ENCODE measurements at regions of chr7 and their contacts with region 1.

Region 1: DNA sequence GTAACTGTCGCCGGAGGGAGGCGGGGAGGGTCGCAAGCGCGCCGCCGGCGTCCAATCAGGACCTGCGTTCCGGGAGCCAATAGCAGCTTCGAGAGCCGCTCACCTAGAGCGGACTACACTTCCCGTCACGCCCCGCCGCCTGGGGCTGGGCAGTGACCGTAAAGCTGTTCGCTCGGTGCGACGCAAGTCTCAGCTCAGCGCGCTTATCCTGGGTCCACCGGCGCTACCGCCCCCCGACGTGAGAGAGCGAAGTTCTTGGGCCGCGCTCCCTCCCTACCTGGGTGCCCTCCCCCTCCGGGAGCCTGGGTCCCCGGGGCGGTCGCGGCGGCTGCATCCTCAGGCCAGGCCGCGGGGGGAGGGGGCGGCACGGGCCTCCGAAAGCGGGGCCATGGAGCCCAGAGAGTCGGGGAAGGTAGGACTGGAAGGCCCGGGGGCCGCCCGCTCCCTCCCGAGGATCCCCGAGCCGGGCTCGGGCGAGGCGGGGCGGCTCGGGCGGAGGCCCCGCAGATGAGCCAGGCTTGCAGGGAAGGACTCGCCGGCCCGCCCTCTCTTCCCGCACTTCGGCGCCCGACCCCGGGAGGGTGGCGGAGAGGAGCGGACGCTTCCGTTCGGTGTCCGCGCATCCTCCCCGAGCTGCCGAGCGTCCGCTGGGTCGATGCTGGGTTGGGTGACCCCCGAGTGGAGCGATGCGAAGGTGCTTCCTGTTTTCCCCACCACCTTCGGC is at the start of gene ZNF862:
- DNase-seq: peak; percentile 99
- H3K4me3 ChIP-seq: peak within 1 kb of the TSS; percentile 86 to 99 (median 98)
- H3K27ac ChIP-seq: peak within 1 kb of the TSS; percentile 94 to 98 (median 96)
- H3K4me1 ChIP-seq: peaks cover 10 to 21% (median 17%) of the 10 kb centered on the region in 4 donors
- H3K27me3 ChIP-seq: peaks cover 0 to 9% (median 0%) of the 10 kb centered on the region in 4 donors
- CTCF ChIP-seq: no peak
- EP300 ChIP-seq: no peak
- POLR2A ChIP-seq: peak; percentile 17
- total RNA-seq, gene ZNF862: 9.1 to 17.1 (median 13.3) TPM

Region 2: GRCh38 chr7:149714050-149714909 is 124.1 kb before region 1 on chr7:
- intact Hi-C with region 1: loop called (anchors 5 kb)
- DNase-seq: no peak
- H3K4me3 ChIP-seq: peak overlapping the region; percentile 72 to 85 (median 77)
- H3K27ac ChIP-seq: peak overlapping the region; percentile 81 to 87 (median 82)
- H3K4me1 ChIP-seq: peaks cover 22 to 48% (median 35%) of the 10 kb centered on the region in 4 donors
- H3K27me3 ChIP-seq: no peaks in the 10 kb centered on the region
- CTCF ChIP-seq: no peak
- EP300 ChIP-seq: no peak
- POLR2A ChIP-seq: no peak

Region 3: DNA sequence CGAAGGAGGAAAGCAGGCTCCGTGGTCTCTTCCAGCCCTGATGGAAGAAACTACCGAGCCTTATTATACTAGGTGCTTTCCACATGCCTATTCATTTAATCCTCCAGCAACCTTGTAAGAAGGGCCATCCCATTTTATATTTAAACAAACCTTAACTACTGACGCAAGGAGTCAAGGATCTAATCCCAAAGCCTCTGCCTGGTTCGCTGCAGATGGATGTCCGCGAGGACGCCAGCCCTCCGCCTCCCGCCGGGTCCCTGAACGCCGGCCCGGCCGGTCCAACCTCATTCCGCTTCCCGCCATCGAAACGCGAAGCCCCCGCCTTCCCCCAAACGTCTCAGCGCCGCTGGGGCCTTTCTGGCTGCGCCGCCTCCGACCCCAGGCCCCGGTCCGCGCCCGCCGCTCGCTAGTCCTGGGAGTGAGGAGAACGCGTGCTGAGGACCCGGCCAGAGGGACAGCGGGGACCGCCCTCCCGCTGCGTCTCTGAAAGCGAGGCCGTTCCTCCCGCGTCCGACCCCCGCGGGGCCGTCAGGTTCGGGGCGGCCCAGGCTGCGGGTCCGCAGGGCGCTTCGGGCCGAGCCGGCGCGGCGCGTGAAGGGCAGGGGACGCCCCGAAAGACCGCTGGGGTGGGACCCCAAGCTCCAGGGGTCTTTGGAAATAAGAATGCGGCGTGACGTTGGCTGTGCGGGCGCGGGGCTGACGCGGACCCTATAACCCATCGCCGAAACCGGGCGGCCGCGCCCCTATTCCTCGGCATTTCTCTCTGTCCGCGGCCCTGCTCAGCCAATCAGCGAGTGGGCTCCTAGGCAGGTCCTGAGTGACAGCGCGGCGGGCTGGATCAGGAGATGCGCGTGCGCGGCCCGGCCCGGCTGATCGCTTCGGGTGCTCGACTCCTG is 34.9 kb after region 1 on chr7 and contains the start of gene ATP6V0E2:
- intact Hi-C with region 1: loop called (anchors 5 kb)
- DNase-seq: peak; percentile 98
- H3K4me3 ChIP-seq: peak within 1 kb of the TSS; percentile 83 to 94 (median 92)
- H3K27ac ChIP-seq: peak within 1 kb of the TSS; percentile 93 to 97 (median 96)
- H3K4me1 ChIP-seq: peaks cover 22 to 33% (median 25%) of the 10 kb centered on the region in 4 donors
- H3K27me3 ChIP-seq: no peaks in the 10 kb centered on the region
- CTCF ChIP-seq: no peak
- EP300 ChIP-seq: no peak
- POLR2A ChIP-seq: no peak
- total RNA-seq, gene ATP6V0E2: 17.9 to 55.1 (median 32.7) TPM

Measured in esophagus muscularis mucosa (tissue), 4 donors.